Activated CD8-positive, alpha-beta memory T cell treated with anti-CD3 and anti-CD28 coated beads, Interleukin-2, amount 10 ng/mL, durations not matched to agents 7 days and 5 days (primary cell): ENCODE measurements at regions of chr10 and their contacts with region 1.

Region 1: DNA sequence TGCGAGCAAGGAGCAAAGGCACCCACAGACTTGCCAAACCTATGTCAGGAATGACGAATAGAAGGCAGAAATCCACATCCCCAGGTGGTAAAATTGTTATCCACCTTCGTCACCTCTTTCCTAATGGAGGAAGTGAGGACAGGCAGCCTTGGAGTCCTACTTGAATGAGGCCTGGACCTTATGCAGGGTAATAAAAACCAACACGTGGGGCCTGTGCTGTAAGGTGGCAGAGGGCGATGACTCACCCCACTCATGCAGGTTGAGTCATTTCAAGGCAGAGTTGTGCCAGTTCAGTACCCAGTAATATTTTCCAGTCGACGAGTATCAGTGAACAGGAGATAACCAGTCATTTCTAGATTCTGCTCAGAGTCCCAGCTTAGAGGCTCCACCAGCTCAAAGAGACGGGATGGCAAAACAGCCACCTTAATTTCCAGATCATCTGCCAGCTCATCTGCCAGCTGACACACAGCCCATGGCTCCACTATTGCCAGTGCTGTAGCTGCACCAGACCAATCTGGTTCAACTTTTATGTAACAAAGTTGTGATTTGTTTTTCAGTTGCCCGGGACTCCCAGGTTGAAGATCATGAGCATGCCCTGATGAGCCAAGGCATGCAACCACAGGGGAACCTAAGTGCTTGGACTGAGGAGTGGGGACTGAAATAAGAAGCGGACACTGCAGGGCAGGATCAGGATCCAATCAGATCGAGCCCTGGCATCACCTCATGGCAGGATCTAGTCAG is 176.2 kb upstream of the ITGB1 start:
- DNase-seq: peak; percentile 82
- ATAC-seq: peak; percentile 80
- H3K4me3 Mint-ChIP-seq: no peak overlapping the region
- H3K27ac Mint-ChIP-seq: peak overlapping the region; percentile 82
- H3K4me1 Mint-ChIP-seq: peaks cover 57% of the 10 kb centered on the region
- H3K27me3 Mint-ChIP-seq: no peaks in the 10 kb centered on the region

Region 2: DNA sequence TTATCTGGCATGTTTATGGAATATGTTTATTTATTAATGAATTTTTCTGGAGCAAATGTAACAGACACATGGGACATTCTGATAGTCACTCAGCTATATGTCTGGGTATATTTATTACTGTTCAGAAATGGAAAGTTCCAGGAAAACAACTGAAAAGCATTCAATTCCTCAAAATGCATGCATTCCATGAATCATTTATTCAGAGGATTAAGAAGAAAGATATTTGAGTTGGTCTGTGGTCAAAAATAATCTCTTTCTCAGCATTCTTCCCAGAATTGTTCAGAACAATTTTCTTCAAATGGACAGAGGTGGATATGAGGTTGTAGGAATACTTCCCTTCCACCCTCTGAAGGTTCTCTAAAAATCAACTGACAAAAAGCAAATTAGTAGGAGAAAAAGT is 78.6 kb before region 1 on chr10:
- CTCF ChIA-PET with region 1: no interaction called
- DNase-seq: no peak
- ATAC-seq: no peak
- H3K4me3 Mint-ChIP-seq: no peak overlapping the region
- H3K27ac Mint-ChIP-seq: no peak overlapping the region
- H3K4me1 Mint-ChIP-seq: peaks cover 2% of the 10 kb centered on the region
- H3K27me3 Mint-ChIP-seq: peaks cover 2% of the 10 kb centered on the region

Region 3: GRCh38 chr10:33115738-33116719 is 18.2 kb before region 1 on chr10:
- CTCF ChIA-PET with region 1: interaction called, 13 read pairs
- DNase-seq: no peak
- ATAC-seq: peak; percentile 20
- H3K4me3 Mint-ChIP-seq: no peak overlapping the region
- H3K27ac Mint-ChIP-seq: peak overlapping the region; percentile 79
- H3K4me1 Mint-ChIP-seq: peaks cover 74% of the 10 kb centered on the region
- H3K27me3 Mint-ChIP-seq: peaks cover 2% of the 10 kb centered on the region

Region 4: GRCh38 chr10:33154590-33154989 is 20.4 kb after region 1 on chr10:
- CTCF ChIA-PET with region 1: interaction called, 11 read pairs
- DNase-seq: no peak
- ATAC-seq: no peak
- H3K4me3 Mint-ChIP-seq: no peak overlapping the region
- H3K27ac Mint-ChIP-seq: no peak overlapping the region
- H3K4me1 Mint-ChIP-seq: peaks cover 44% of the 10 kb centered on the region
- H3K27me3 Mint-ChIP-seq: no peaks in the 10 kb centered on the region

Region 5: GRCh38 chr10:33180390-33180789 is 46.2 kb after region 1 on chr10:
- CTCF ChIA-PET with region 1: no interaction called
- DNase-seq: no peak
- ATAC-seq: no peak
- H3K4me3 Mint-ChIP-seq: no peak overlapping the region
- H3K27ac Mint-ChIP-seq: no peak overlapping the region
- H3K4me1 Mint-ChIP-seq: no peaks in the 10 kb centered on the region
- H3K27me3 Mint-ChIP-seq: peaks cover 16% of the 10 kb centered on the region